Activated CD4-positive, alpha-beta T cell treated with anti-CD3 and anti-CD28 coated beads for 36 hours (primary cell): ENCODE measurements at regions of chr3 and their contacts with region 1.

Region 1: GRCh38 chr3:42590989-42591756 is 513 bp downstream of the SS18L2 start:
- DNase-seq: peak; percentile 29
- ATAC-seq: no peak
- H3K4me3 Mint-ChIP-seq: peak overlapping the region; percentile 90
- H3K27ac Mint-ChIP-seq: peak overlapping the region; percentile 95
- H3K4me1 Mint-ChIP-seq: peaks cover 34% of the 10 kb centered on the region
- H3K27me3 Mint-ChIP-seq: no peaks in the 10 kb centered on the region

Region 2: DNA sequence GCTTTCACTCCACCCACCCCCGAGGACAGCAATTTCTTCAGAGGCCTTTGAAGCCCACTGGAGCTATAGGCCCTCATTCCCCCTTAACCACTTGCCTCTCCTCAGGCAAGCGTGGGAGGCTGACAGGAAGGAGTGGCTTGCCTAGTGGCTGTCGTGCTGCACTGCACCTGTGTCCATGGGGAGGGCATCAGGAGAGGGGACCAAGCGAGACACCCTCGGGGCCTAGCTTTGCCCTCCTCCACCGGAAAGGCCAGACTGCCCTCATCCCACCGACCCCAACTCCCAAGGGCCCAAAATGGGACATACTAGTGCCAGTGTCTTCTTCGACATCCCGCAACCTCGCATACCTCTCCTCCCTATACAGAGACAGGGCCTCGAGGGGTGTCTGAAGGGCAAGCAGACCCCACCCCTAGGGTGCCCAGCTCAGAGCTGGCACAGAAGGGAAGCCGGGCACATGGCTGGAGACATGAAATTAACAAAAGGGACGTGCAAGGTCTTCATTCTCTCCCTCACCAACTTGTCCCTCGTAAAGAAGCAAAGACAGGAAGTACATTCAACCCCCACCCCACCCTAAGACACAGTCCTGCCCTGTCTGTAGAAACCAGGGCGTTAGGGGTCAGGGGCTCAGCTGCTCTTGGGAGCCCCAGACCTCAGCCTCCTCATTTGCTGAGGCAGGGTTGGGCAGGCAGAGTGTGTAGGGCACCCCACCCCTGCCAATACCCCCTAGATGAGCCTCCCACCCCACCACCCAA is 64.4 kb before region 1 on chr3:
- CTCF ChIA-PET with region 1: no interaction called
- POLR2A ChIA-PET with region 1: no interaction called
- intact Hi-C with region 1: no loop called
- DNase-seq: peak; percentile 77
- ATAC-seq: peak; percentile 88
- H3K4me3 Mint-ChIP-seq: no peak overlapping the region
- H3K27ac Mint-ChIP-seq: peak overlapping the region; percentile 86
- H3K4me1 Mint-ChIP-seq: peaks cover 64% of the 10 kb centered on the region
- H3K27me3 Mint-ChIP-seq: no peaks in the 10 kb centered on the region

Region 3: DNA sequence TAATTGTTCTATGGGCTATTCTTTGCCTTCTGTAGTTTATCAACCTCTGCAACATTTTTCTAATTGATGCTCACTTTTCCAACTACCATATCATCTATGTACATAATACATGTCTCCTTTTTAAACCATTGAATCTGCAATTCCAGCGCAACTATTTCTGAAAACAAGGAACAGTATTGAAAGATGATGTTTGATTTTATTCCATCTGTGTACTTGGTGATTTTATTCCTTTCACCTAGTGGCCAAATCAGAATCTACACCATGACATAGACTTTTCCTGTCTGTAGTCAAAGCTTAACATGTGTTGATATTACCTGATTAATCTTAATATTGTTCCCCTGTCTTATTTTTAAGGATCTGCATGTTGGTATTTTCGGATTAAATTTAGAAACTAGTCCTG is 22.3 kb after region 1 on chr3:
- CTCF ChIA-PET with region 1: interaction called, 5 read pairs
- POLR2A ChIA-PET with region 1: interaction called, 10 read pairs
- intact Hi-C with region 1: no loop called
- DNase-seq: no peak
- ATAC-seq: peak; percentile 49
- H3K4me3 Mint-ChIP-seq: no peak overlapping the region
- H3K27ac Mint-ChIP-seq: peak overlapping the region; percentile 1
- H3K4me1 Mint-ChIP-seq: peaks cover 63% of the 10 kb centered on the region
- H3K27me3 Mint-ChIP-seq: no peaks in the 10 kb centered on the region

Region 4: DNA sequence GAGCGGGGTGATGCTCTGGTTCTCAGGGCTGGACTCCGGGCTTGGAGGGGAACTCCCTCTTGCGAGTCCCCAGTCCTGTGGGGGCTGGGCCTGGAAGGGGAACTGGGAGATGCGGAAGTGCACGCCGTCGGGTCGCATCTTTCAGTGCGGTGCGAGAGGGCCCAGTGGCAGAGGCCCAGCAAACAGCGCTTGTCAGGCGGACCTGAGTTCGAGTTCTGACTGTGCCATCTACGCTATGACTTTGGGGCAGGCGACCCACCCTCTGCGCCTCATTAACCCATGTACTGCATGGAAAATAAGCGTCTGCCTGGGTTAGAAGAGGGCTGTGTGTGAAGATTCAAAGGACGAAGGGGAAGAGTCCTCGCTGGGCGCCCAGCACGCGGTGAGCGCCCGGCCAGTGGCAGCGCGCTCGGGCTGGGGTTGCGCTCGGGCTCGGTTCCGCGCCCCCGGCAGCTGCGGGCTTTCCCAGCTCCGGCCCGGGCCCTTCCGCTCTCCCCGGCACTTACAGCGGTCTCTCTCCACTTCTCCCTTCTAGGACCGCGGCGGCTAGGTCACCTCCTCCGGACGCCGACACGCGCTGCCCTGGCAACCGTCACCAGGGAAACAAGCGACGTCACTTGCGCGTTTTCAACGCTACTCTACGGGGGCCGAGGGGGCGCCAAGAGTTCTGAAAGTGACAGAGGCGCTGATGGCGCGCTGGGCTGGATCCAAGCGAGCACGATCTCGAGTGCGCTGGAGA is 181.7 kb after region 1 on chr3 and contains the start of gene CCDC13:
- CTCF ChIA-PET with region 1: no interaction called
- POLR2A ChIA-PET with region 1: no interaction called
- intact Hi-C with region 1: loop called in 1 of 2 experiments (anchors 1 kb)
- DNase-seq: peak; percentile 96
- ATAC-seq: peak; percentile 96
- H3K4me3 Mint-ChIP-seq: peak within 1 kb of the TSS; percentile 83
- H3K27ac Mint-ChIP-seq: peak within 1 kb of the TSS; percentile 82
- H3K4me1 Mint-ChIP-seq: peaks cover 12% of the 10 kb centered on the region
- H3K27me3 Mint-ChIP-seq: no peaks in the 10 kb centered on the region
- total RNA-seq, gene CCDC13: 0.46 to 0.63 TPM

Region 5: DNA sequence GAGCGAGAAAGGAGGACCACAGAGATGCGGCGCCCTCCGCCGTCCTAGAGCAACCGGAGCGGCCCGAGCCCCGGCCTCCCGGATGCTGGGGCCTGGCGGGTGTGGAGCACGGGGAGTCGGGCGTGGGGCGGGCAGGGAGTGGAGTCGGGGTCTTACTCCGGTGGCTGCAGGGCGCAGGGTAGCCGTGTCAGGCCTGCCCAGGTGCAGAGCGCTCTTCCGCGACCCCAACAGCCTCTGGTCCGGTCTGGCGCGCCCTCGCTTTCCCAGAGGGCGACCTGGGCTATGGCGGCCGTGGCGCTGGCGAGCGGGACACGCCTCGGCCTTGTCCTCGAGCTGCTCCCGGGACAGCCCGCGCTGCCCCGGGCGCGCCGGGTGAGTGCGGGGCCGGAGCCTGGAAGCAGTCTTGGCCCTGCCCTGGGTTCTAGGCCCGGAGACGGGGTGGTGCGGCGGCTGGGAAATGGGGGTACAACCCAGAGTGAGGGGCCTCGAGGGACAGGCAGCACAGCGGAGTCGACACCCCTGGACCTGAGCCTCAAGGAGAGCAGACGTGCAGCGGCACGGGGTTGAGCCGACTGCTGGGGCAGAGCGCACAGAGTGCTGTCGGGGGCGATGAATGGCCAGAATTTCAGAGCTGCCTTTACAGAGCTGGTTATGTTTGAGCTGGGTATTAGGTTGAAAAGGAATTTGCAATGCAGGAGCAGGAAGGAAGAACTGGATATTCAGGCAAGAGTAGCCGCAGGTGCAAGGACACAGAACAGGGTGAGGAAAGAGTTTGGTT is 315.1 kb after region 1 on chr3 and contains the start of gene ZNF662:
- CTCF ChIA-PET with region 1: no interaction called
- POLR2A ChIA-PET with region 1: no interaction called
- intact Hi-C with region 1: no loop called
- DNase-seq: peak; percentile 49
- ATAC-seq: peak; percentile 63
- H3K4me3 Mint-ChIP-seq: peak within 1 kb of the TSS; percentile 56
- H3K27ac Mint-ChIP-seq: peak within 1 kb of the TSS; percentile 2
- H3K4me1 Mint-ChIP-seq: peaks cover 11% of the 10 kb centered on the region
- H3K27me3 Mint-ChIP-seq: peaks cover 26% of the 10 kb centered on the region
- total RNA-seq, gene ZNF662: 1.1 to 1.3 TPM

Region 6: DNA sequence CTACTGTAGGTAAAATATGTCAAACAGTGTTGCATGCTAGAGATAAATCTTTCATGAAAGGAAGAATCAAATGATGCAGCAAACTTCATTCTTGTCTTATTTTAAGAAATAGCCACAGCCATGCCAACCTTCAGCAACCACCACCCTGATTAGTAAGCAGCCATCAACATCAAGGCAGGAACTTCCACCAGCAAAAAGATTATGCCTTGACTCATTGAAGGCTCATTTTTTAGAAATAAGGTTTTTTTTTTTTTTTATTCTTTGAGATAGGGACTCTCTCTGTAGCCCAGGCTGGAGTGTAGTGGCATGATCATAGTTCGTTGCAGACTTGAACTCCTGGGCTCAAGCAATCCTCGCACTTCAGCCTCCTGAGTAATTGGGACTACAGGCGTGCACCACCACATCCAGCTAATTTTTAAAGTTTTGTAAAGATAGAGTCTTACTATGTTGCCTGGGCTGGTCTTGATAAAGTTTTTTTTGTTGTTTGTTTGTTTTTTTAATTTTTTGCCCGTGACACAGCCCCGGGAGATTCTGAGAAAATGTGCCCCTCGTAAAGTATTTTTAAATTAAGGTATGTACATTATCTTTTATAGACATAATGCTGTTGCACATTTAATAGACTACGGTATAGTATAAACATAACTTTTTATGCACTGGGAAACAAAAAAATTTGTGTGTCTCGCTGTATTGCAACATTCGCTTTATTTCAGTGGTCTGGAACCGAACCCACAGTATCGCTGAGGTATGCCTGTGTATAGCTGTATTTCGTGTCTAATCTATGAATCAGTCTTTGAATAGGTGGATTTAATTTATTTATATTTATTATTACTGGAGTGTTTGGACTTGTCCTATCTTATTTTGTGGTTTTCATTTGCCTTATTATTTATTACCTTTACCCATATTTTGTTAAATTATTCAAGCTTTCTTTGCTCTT is 718.5 kb after region 1 on chr3:
- CTCF ChIA-PET with region 1: no interaction called
- POLR2A ChIA-PET with region 1: no interaction called
- intact Hi-C with region 1: no loop called
- DNase-seq: no peak
- ATAC-seq: no peak
- H3K4me3 Mint-ChIP-seq: no peak overlapping the region
- H3K27ac Mint-ChIP-seq: peak overlapping the region; percentile 25
- H3K4me1 Mint-ChIP-seq: peaks cover 69% of the 10 kb centered on the region
- H3K27me3 Mint-ChIP-seq: no peaks in the 10 kb centered on the region

Region 7: GRCh38 chr3:43559963-43560362 is 968.8 kb after region 1 on chr3:
- CTCF ChIA-PET with region 1: no interaction called
- POLR2A ChIA-PET with region 1: no interaction called
- intact Hi-C with region 1: no loop called
- DNase-seq: no peak
- ATAC-seq: no peak
- H3K4me3 Mint-ChIP-seq: no peak overlapping the region
- H3K27ac Mint-ChIP-seq: no peak overlapping the region
- H3K4me1 Mint-ChIP-seq: no peaks in the 10 kb centered on the region
- H3K27me3 Mint-ChIP-seq: no peaks in the 10 kb centered on the region